ENCODE measurements at regions of chr11 and their contacts with region 1.

Region 1: GRCh38 chr11:819129-819931 is 616 bp downstream of the PNPLA2 start:
- DNase-seq: peak; percentile 92
- H3K4me3 Mint-ChIP-seq: peak overlapping the region; percentile 79
- H3K27ac Mint-ChIP-seq: peak overlapping the region; percentile 58
- H3K4me1 Mint-ChIP-seq: peaks cover 14% of the 10 kb centered on the region
- H3K27me3 Mint-ChIP-seq: no peaks in the 10 kb centered on the region

Region 2: GRCh38 chr11:560305-561147 is 258.8 kb before region 1 on chr11 and contains the starts of genes LMNTD2 and RASSF7:
- CTCF ChIA-PET with region 1: no interaction called
- POLR2A ChIA-PET with region 1: no interaction called
- intact Hi-C with region 1: no loop called
- DNase-seq: peak; percentile 96
- H3K4me3 Mint-ChIP-seq: peak within 1 kb of the TSS; percentile 90
- H3K27ac Mint-ChIP-seq: peak within 1 kb of the TSS; percentile 67
- H3K4me1 Mint-ChIP-seq: peaks cover 14% of the 10 kb centered on the region
- H3K27me3 Mint-ChIP-seq: peaks cover 5% of the 10 kb centered on the region
- total RNA-seq, gene LMNTD2: 3.1 to 3.9 TPM
- total RNA-seq, gene RASSF7: 18.8 to 21.9 TPM

Region 3: GRCh38 chr11:662689-663274 is 156.5 kb before region 1 on chr11:
- CTCF ChIA-PET with region 1: no interaction called
- POLR2A ChIA-PET with region 1: no interaction called
- intact Hi-C with region 1: no loop called
- DNase-seq: peak; percentile 56
- H3K4me3 Mint-ChIP-seq: no peak overlapping the region
- H3K27ac Mint-ChIP-seq: no peak overlapping the region
- H3K4me1 Mint-ChIP-seq: no peaks in the 10 kb centered on the region
- H3K27me3 Mint-ChIP-seq: no peaks in the 10 kb centered on the region

Region 4: DNA sequence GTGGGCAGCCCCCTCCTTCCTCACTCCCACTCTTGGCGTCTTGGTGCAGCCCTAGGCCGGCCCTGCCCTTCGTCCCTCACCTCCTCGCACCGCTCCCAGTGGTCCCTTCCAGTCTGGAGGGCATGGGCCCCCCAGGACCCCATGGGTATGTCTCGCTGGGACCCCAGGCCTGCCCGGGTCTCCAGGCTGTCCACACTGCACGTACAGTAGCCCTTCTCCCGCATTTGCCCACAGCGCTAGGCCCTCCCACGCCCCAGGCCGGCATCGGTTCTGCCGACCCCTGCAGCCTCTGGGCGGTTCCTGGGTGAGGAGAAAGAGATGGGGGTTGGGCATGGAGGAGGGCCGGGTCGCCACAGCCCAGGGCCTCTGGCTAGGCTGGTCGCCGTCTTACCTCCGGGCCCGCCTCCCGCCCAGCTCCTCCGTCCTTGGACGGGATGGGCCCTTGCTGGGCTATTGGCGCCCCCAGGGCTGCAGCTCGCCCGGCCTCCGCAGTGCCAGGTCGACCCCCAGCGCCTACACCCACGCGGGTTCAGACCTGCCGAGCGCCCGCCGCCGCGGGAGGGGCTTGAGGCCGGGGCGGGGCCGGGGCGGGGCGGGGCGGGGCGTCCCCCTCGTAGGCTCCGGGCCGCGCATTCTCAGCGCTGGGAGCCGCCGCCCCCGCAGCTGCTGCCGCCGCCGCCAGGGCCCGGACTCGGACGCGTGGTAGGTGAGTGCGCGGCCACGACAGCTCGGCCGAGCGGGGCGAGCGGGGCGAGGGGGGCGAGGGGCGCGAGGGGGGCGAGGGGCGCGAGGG is 13.2 kb after region 1 on chr11 and contains the start of gene CD151:
- CTCF ChIA-PET with region 1: no interaction called
- POLR2A ChIA-PET with region 1: interaction called, 7 read pairs
- intact Hi-C with region 1: loop called (anchors 1 kb)
- DNase-seq: peak; percentile 67
- H3K4me3 Mint-ChIP-seq: peak within 1 kb of the TSS; percentile 65
- H3K27ac Mint-ChIP-seq: no peak within 1 kb of the TSS
- H3K4me1 Mint-ChIP-seq: peaks cover 28% of the 10 kb centered on the region
- H3K27me3 Mint-ChIP-seq: peaks cover 34% of the 10 kb centered on the region
- total RNA-seq, gene CD151: 40.2 to 40.9 TPM